KBM-7 (cell line): ENCODE measurements at regions of chr22 and their contacts with region 1.

Region 1: GRCh38 chr22:35627264-35628041 is 10.3 kb upstream of the MB start:
- DNase-seq: peak; percentile 74

Region 2: DNA sequence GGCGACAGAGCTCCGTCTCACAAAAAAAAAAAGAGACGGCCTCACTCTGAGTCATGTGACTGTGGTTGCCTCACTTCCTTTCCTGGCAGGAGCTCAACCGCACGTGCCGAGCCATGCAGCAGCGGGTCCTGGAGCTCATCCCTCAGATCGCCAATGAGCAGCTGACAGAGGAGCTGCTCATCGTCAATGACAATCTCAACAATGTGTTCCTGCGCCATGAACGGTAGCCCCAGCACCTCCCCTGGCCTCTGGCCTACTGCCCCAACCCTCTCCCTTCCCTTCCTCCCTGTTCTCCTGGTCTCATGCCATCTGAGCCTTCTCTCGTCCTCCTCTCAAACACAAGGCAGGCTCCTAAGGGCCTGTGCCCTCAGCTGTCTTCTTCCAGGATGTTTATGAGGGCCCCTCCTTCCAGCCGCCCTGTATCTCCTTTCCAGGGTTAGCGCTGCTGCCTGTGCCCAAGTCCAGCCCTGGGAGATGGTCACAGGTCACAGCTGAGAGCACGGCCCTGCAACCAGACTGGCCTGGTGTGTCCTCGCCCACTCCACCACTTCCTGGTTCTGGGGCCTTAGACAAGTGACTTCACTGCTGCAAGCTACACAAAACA is 297.1 kb before region 1 on chr22:
- in situ Hi-C with region 1: no loop called
- DNase-seq: peak; percentile 90

Region 3: DNA sequence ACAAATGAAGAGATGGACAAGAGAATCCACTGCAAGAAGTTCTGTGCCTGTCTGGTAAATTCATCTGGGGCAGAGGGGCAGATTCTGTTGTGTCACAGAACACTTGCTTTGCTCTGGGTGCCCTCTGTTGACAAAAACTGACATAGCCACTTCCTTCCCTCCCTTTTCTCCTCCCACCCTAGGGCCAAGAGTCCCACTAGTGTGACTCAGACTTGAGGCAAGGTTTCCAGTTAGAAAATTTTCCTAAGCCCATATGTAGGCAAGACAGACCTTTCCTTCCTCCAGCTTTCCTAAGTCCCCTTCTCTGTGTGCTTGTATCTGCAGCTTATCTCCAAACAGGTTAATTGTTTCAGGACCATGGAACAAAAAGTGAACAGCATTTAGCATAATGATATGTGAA is 294.3 kb after region 1 on chr22:
- in situ Hi-C with region 1: loop called (anchors 25 kb)
- DNase-seq: peak; percentile 83

Region 4: DNA sequence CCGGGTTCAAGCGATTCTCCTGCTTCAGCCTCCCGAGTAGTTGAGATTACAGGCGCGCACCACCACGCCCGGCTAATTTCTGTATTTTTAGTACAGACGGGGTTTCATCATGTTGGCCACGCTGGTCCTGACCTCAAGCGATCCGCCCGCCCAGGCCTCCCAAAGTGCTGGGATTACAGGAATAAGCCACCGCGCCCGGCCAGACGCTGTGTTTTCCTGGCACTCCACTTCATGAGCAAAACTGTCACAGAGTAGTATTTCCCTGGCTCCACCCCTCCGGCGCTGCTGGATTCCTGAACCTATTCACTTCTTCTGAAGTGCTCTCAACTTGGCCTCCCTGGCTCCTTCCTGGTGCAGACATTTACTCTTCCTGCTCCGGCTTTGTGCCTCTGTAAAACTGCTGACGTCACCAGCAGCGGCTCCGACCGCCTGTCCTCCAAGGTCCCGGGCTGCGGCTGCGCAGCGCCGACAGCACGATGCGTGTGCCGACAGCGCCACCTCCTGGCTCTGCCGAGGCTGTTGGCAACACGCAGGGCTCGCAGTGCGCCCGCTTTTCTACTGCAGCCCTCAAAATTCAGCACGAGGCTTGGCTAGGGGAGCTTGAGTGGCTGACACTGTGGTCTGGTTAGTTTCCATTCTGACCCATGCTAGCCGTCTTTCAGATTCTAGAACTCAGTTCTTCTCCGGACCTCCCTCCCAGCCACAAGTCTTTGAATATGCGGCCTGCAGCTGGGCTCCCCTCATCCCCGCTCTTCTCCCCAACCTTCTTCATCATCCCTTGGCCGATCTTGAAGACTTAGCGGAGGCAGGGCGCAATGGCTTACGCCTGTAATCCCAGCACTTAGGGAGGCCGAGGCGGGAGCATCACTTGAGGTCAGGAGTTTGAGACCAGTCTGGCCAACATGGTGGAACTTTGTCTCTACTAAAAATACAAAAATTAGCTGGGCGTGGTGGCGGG is 496.5 kb after region 1 on chr22:
- in situ Hi-C with region 1: loop called (anchors 25 kb)
- DNase-seq: peak; percentile 93

Region 5: GRCh38 chr22:36339171-36340065 is 712.0 kb after region 1 on chr22:
- in situ Hi-C with region 1: no loop called
- DNase-seq: no peak